CD8-positive, alpha-beta T cell (primary cell): ENCODE measurements at regions of chr2 and their contacts with region 1.

Region 1: GRCh38 chr2:95069465-95069864 is 44.0 kb downstream of the MAL start:
- DNase-seq: peak in 1 of 9 experiments; percentile 47
- ATAC-seq: no peak
- H3K4me3 ChIP-seq: no peak overlapping the region
- H3K4me3 Mint-ChIP-seq: no peak overlapping the region
- H3K27ac ChIP-seq: no peak overlapping the region
- H3K27ac Mint-ChIP-seq: no peak overlapping the region
- H3K4me1 ChIP-seq: peaks cover 19% of the 10 kb centered on the region
- H3K4me1 Mint-ChIP-seq: peaks cover 23% of the 10 kb centered on the region
- H3K27me3 ChIP-seq: no peaks in the 10 kb centered on the region
- H3K27me3 Mint-ChIP-seq: no peaks in the 10 kb centered on the region
- CTCF ChIP-seq: no peak

Region 2: DNA sequence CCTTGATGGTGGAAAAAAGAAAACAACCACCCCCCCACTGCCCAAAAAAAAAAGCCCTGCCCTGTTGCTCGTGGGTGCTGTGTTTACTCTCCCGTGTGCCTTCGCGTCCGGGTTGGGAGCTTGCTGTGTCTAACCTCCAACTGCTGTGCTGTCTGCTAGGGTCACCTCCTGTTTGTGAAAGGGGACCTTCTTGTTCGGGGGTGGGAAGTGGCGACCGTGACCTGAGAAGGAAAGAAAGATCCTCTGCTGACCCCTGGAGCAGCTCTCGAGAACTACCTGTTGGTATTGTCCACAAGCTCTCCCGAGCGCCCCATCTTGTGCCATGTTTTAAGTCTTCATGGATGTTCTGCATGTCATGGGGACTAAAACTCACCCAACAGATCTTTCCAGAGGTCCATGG is 15.9 kb before region 1 on chr2:
- CTCF ChIA-PET with region 1: interaction called, 226 read pairs
- POLR2A ChIA-PET with region 1: interaction called, 67 read pairs
- intact Hi-C with region 1: no loop called
- DNase-seq: peak in 5 of 9 experiments; percentile 25 to 56 (median 30)
- ATAC-seq: peak; percentile 28
- H3K4me3 ChIP-seq: no peak overlapping the region
- H3K4me3 Mint-ChIP-seq: peak overlapping the region; percentile 60
- H3K27ac ChIP-seq: no peak overlapping the region
- H3K27ac Mint-ChIP-seq: peak overlapping the region; percentile 92
- H3K4me1 ChIP-seq: peaks cover 69% of the 10 kb centered on the region
- H3K4me1 Mint-ChIP-seq: peaks cover 66% of the 10 kb centered on the region
- H3K27me3 ChIP-seq: no peaks in the 10 kb centered on the region
- H3K27me3 Mint-ChIP-seq: no peaks in the 10 kb centered on the region
- CTCF ChIP-seq: no peak